Activated CD4-positive, alpha-beta T cell treated with anti-CD3 and anti-CD28 coated beads for 36 hours (primary cell): ENCODE measurements at regions of chr4 and their contacts with region 1.

Region 1: GRCh38 chr4:94451695-94452475 is at the start of gene PDLIM5:
- DNase-seq: peak; percentile 94
- ATAC-seq: peak; percentile 96
- H3K4me3 Mint-ChIP-seq: peak within 1 kb of the TSS; percentile 84
- H3K27ac Mint-ChIP-seq: peak within 1 kb of the TSS; percentile 61
- H3K4me1 Mint-ChIP-seq: peaks cover 23% of the 10 kb centered on the region
- H3K27me3 Mint-ChIP-seq: peaks cover 10% of the 10 kb centered on the region
- total RNA-seq, gene PDLIM5: 25.9 to 34.3 TPM

Region 2: DNA sequence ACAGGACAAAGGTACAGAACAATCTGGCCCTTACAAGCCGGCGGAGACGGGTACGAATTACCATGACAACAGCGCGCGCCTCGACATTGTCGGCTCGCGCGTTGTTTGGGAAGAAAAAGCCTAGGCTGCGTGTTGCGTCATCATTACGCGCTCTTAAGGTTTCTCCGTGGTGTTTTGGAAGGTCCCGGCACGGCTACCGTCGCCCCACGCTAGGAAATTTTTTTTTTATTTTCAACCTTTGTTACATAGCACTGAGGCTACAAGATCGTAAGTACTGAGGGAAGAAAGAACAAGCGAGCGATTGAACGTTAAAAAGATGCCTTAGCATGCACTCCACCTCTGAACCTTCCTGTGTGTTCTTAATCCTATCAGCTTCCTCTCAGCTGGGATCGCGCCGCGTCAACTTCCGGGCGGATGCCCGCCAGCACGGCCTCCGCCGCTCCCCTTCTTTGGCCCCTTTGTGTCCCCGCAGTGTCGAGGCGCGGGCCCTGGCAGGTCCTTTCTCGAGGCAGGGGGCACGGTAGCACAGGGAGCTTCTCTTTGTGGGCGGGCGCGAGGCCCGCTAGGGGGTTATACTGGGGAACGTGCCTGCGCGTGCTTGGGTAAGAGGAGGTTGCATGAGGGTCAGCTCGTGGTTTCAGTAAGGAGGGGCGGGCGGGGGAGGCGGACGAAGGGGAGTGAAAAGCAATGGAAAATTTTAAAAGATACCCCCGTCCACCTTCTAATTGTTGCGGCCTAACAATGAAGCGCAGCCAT is 244.2 kb before region 1 on chr4 and contains the start of gene SMARCAD1:
- CTCF ChIA-PET with region 1: no interaction called
- POLR2A ChIA-PET with region 1: no interaction called
- intact Hi-C with region 1: loop called (anchors 1 to 2 kb)
- DNase-seq: peak; percentile 95
- ATAC-seq: peak; percentile 94
- H3K4me3 Mint-ChIP-seq: peak within 1 kb of the TSS; percentile 92
- H3K27ac Mint-ChIP-seq: peak within 1 kb of the TSS; percentile 99
- H3K4me1 Mint-ChIP-seq: peaks cover 27% of the 10 kb centered on the region
- H3K27me3 Mint-ChIP-seq: peaks cover 4% of the 10 kb centered on the region
- total RNA-seq, gene SMARCAD1: 32.3 to 33.1 TPM

Region 3: GRCh38 chr4:94349193-94349592 is 102.7 kb before region 1 on chr4:
- CTCF ChIA-PET with region 1: no interaction called
- POLR2A ChIA-PET with region 1: no interaction called
- intact Hi-C with region 1: loop called in 1 of 2 experiments (anchors 1 kb)
- DNase-seq: no peak
- ATAC-seq: peak; percentile 91
- H3K4me3 Mint-ChIP-seq: no peak overlapping the region
- H3K27ac Mint-ChIP-seq: no peak overlapping the region
- H3K4me1 Mint-ChIP-seq: peaks cover 44% of the 10 kb centered on the region
- H3K27me3 Mint-ChIP-seq: peaks cover 4% of the 10 kb centered on the region

Region 4: DNA sequence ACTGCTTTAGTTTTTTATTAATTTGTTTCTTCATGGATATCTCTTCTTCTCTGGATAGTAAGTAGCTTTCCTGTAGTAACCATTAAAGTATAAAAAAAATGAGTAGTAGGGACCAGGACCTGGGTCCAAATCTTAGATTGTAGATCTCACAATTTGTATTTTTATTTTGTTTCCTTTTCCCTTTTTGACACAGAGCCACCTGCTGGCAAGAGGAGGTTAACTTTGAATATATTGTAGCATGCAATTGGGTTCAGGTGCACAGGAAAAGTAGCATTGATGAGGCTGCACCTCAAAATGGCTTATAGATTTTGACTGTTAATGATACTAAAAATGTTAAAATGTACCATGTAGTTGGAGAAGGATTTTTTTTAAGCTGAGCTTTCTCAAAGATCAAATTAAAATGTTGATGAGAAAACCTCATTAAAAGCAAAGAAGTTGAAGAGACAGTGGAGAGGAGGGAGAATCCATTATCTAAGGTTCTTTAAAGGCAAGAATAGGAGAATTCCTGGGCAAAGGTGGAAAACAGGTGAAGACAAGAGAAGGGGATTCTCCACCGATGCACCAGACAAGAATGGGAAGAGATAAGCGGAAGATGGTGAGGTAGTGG is 61.0 kb before region 1 on chr4:
- CTCF ChIA-PET with region 1: no interaction called
- POLR2A ChIA-PET with region 1: no interaction called
- intact Hi-C with region 1: no loop called
- DNase-seq: peak; percentile 43
- ATAC-seq: no peak
- H3K4me3 Mint-ChIP-seq: no peak overlapping the region
- H3K27ac Mint-ChIP-seq: no peak overlapping the region
- H3K4me1 Mint-ChIP-seq: no peaks in the 10 kb centered on the region
- H3K27me3 Mint-ChIP-seq: peaks cover 7% of the 10 kb centered on the region

Region 5: DNA sequence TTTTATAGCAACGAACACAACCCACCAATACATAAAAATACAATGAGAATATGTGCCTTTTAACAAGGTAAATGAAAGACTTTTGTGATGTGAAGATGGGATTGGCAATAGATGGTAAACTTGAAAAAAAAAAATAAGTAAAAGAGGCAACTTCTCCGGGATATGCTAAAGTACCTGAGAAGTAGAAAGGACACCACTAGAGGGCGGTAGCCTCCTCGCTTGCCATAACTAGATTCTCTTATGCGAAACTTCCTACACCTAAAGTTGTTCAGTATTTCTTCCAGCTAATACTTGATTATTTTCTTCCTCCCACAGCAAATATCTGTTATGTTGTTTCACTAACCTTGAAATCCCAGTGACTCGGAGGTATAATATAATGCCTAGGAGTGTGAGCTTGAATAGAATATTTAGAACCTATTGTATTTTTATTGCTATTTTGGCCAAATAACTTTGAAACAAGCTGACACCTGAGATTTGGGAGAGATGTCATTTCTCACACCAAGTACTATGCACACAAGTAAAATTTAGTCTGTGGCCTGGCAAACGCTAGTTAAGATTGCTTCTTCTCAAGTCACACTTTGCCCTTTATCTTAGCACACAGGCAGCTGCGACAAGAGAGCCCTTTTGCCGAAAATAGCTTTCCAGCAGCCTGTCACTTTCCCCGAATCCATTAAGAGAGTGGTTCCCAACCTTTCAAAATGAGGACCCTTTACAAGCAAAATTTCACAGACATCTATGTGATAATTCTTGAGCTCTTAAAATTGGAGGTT is 45.0 kb before region 1 on chr4:
- CTCF ChIA-PET with region 1: interaction called, 4 read pairs
- POLR2A ChIA-PET with region 1: no interaction called
- intact Hi-C with region 1: loop called in 1 of 2 experiments (anchors 2 kb)
- DNase-seq: peak; percentile 74
- ATAC-seq: peak; percentile 65
- H3K4me3 Mint-ChIP-seq: no peak overlapping the region
- H3K27ac Mint-ChIP-seq: no peak overlapping the region
- H3K4me1 Mint-ChIP-seq: no peaks in the 10 kb centered on the region
- H3K27me3 Mint-ChIP-seq: peaks cover 4% of the 10 kb centered on the region

Region 6: GRCh38 chr4:94507708-94508107 is 55.8 kb after region 1 on chr4:
- CTCF ChIA-PET with region 1: no interaction called
- POLR2A ChIA-PET with region 1: no interaction called
- intact Hi-C with region 1: loop called in 1 of 2 experiments (anchors 5 kb)
- DNase-seq: peak; percentile 23
- ATAC-seq: peak; percentile 99
- H3K4me3 Mint-ChIP-seq: no peak overlapping the region
- H3K27ac Mint-ChIP-seq: no peak overlapping the region
- H3K4me1 Mint-ChIP-seq: peaks cover 16% of the 10 kb centered on the region
- H3K27me3 Mint-ChIP-seq: no peaks in the 10 kb centered on the region

Region 7: GRCh38 chr4:94595879-94596483 is 144.1 kb after region 1 on chr4:
- CTCF ChIA-PET with region 1: interaction called, 4 read pairs
- POLR2A ChIA-PET with region 1: no interaction called
- intact Hi-C with region 1: loop called in 1 of 2 experiments (anchors 5 kb)
- DNase-seq: no peak
- ATAC-seq: peak; percentile 53
- H3K4me3 Mint-ChIP-seq: no peak overlapping the region
- H3K27ac Mint-ChIP-seq: no peak overlapping the region
- H3K4me1 Mint-ChIP-seq: no peaks in the 10 kb centered on the region
- H3K27me3 Mint-ChIP-seq: no peaks in the 10 kb centered on the region

Region 8: GRCh38 chr4:95850161-95850560 is 1398.3 kb after region 1 on chr4:
- CTCF ChIA-PET with region 1: no interaction called
- POLR2A ChIA-PET with region 1: no interaction called
- intact Hi-C with region 1: no loop called
- DNase-seq: no peak
- ATAC-seq: no peak
- H3K4me3 Mint-ChIP-seq: no peak overlapping the region
- H3K27ac Mint-ChIP-seq: no peak overlapping the region
- H3K4me1 Mint-ChIP-seq: no peaks in the 10 kb centered on the region
- H3K27me3 Mint-ChIP-seq: no peaks in the 10 kb centered on the region